Caco-2 (cell line): ENCODE measurements at regions of chr5 and their contacts with region 1.

Region 1: GRCh38 chr5:150122158-150122510 is 33.5 kb downstream of the PDGFRB start:
- DNase-seq: peak; percentile 74 to 75
- H3K4me3 ChIP-seq: no peak overlapping the region
- H3K4me3 Mint-ChIP-seq: no peak overlapping the region
- H3K27ac Mint-ChIP-seq: peak overlapping the region; percentile 2
- H3K4me1 ChIP-seq: peaks cover 18% of the 10 kb centered on the region
- H3K4me1 Mint-ChIP-seq: peaks cover 10% of the 10 kb centered on the region
- H3K27me3 ChIP-seq: no peaks in the 10 kb centered on the region
- H3K27me3 Mint-ChIP-seq: no peaks in the 10 kb centered on the region
- CTCF ChIP-seq: peak; percentile 66 to 72

Region 2: DNA sequence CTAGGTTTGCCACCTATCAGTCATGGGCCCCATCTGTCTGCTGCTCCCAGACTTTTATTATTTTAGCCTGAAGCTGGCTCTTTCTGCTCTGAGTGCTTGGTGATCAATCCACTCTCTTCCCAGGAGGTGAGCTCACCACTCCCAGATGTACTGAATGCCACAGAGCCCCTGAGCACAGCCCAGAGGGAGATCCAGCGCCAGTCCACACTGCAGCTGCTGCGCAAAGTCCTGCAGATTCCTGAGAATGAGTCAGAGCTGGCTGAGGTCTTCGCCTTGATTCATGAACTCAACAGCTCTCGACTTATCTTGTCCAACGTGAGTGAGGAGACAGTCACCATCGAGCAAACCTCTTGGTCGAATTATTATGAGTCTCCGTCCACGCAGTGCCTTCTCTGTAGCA is 85.6 kb before region 1 on chr5:
- CTCF ChIA-PET with region 1: no interaction called
- POLR2A ChIA-PET with region 1: no interaction called
- intact Hi-C with region 1: no loop called
- DNase-seq: peak; percentile 27 to 70
- H3K4me3 ChIP-seq: no peak overlapping the region
- H3K4me3 Mint-ChIP-seq: no peak overlapping the region
- H3K27ac Mint-ChIP-seq: no peak overlapping the region
- H3K4me1 ChIP-seq: 0 out of 2 replicates have a peak, but pooled peaks cover 3% of the 10 kb centered on the region
- H3K4me1 Mint-ChIP-seq: no peaks in the 10 kb centered on the region
- H3K27me3 ChIP-seq: no peaks in the 10 kb centered on the region
- H3K27me3 Mint-ChIP-seq: no peaks in the 10 kb centered on the region
- CTCF ChIP-seq: no peak

Region 3: GRCh38 chr5:150075871-150076288 is 46.3 kb before region 1 on chr5:
- CTCF ChIA-PET with region 1: interaction called, 9 read pairs
- POLR2A ChIA-PET with region 1: no interaction called
- intact Hi-C with region 1: loop called (anchors 1 kb)
- DNase-seq: peak in 1 of 2 experiments; percentile 21
- H3K4me3 ChIP-seq: no peak overlapping the region
- H3K4me3 Mint-ChIP-seq: no peak overlapping the region
- H3K27ac Mint-ChIP-seq: no peak overlapping the region
- H3K4me1 ChIP-seq: no peaks in the 10 kb centered on the region
- H3K4me1 Mint-ChIP-seq: peaks cover 5% of the 10 kb centered on the region
- H3K27me3 ChIP-seq: no peaks in the 10 kb centered on the region
- H3K27me3 Mint-ChIP-seq: no peaks in the 10 kb centered on the region
- CTCF ChIP-seq: peak in 1 of 2 experiments; percentile 6